Aorta (tissue), 5 donors: ENCODE measurements at regions of chr9 and their contacts with region 1.

Region 1: GRCh38 chr9:17906176-17906840 is 327.4 kb downstream of the SH3GL2 start:
- DNase-seq: peak; percentile 64 to 79
- ATAC-seq: peak; percentile 74
- H3K4me3 ChIP-seq: peak overlapping the region; percentile 65 to 76
- H3K27ac ChIP-seq: peak overlapping the region in 1 of 2 donors; percentile 33
- H3K4me1 ChIP-seq: no peaks in the 10 kb centered on the region
- H3K27me3 ChIP-seq: no peaks in the 10 kb centered on the region

Region 2: DNA sequence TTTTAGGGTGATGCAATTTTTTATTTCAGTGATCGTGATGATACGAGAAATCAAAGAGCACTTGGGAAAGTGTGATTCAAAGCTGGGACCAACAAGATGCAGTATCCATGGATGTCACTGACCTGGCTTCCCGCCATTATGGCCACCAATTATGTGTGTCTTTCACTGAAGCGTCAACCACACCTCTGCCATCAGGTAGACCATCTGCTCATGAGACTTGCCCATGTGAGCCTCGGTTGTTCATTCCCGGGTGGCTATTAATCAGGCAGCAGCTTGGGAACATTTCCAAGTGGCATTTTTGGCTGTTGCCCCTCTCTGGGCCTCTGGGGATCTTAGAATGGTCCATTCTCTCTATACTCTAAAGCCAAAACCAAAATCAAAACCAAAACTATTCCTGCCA is 131.7 kb after region 1 on chr9:
- intact Hi-C with region 1: loop called in 1 of 2 experiments (anchors 5 kb)
- DNase-seq: peak in 1 of 2 donors; percentile 46
- ATAC-seq: no peak
- H3K4me3 ChIP-seq: no peak overlapping the region
- H3K27ac ChIP-seq: peak overlapping the region in 1 of 2 donors; percentile 71
- H3K4me1 ChIP-seq: peaks cover 8 to 23% of the 10 kb centered on the region in 2 donors
- H3K27me3 ChIP-seq: no peaks in the 10 kb centered on the region